GM18951 (cell line): ENCODE measurements at regions of chr6 and their contacts with region 1.

Region 1: DNA sequence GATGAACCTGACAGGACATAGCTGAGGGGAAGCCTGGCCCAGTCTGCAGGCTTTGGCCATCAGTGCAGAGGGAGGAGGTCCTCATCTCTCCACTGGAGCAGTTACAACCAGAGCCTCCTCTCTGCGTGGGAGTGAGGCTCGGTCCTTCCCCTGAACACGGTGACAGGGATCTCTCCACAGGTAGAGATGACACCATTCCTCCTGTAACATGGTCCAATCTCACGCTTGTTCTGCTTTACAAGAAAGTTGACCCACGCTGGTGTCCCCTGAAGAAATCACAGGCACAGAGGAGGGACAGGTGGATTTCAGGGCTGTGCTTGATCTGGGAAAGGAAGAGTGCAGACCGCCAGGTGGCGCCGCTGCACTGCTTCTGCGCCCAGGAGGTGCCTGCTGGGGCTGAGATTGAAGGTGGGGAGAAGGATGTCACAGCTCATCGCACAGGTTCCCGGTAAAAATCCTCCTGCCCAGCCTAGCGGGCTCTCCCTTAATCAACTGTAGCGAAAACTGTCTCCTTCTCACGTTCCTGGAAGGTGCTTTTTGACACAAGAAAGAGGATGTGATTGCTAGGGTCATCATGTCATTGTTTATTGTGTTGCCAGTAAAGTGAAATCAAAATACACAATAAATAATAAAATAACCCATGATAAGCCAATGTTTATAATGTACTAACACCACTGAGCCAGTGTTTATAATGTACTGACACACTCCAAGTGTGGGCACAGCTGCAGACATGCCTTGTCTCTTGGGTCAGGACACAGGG is 20.4 kb downstream of the HLA-G start:
- POLR2A ChIP-seq: no peak

Region 2: DNA sequence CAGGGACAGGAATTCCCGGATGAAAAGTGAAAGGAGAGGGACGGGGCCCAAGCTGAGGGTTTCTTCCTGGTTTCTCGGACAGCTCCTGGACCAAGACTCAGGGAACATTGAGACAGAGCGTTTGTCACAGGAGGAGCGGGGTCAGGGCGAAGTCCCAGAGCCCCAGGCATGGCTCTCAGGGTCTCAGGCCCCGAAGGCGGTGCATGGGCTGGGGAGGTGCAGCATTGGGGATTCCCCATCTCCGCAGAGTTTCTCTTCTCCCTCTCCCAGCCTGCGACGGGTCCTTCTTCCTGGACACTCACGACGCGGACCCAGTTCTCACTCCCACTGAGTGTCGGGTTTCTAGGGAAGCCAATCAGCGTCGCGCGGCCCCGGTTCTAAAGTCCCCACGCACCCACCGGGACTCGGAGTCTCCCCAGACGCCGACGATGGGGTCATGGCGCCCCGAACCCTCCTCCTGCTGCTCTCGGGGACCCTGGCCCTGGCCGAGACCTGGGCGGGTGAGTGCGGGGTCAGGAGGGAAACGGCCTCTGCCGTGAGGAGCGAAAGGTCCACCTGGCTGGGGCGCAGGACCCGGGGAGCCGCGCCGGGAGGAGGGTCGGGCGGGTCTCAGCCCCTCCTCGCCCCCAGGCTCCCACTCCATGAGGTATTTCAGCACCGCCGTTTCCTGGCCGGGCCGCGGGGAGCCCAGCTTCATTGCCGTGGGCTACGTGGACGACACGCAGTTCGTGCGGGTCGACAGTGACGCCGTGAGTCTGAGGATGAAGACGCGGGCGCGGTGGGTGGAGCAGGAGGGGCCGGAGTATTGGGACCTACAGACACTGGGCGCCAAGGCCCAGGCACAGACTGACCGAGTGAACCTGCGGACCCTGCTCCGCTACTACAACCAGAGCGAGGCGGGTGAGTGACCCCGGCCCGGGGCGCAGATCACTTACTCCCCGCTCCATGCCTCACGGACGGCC is 158.4 kb after region 1 on chr6:
- in situ Hi-C with region 1: loop called (anchors 10 kb)
- POLR2A ChIP-seq: no peak

Region 3: DNA sequence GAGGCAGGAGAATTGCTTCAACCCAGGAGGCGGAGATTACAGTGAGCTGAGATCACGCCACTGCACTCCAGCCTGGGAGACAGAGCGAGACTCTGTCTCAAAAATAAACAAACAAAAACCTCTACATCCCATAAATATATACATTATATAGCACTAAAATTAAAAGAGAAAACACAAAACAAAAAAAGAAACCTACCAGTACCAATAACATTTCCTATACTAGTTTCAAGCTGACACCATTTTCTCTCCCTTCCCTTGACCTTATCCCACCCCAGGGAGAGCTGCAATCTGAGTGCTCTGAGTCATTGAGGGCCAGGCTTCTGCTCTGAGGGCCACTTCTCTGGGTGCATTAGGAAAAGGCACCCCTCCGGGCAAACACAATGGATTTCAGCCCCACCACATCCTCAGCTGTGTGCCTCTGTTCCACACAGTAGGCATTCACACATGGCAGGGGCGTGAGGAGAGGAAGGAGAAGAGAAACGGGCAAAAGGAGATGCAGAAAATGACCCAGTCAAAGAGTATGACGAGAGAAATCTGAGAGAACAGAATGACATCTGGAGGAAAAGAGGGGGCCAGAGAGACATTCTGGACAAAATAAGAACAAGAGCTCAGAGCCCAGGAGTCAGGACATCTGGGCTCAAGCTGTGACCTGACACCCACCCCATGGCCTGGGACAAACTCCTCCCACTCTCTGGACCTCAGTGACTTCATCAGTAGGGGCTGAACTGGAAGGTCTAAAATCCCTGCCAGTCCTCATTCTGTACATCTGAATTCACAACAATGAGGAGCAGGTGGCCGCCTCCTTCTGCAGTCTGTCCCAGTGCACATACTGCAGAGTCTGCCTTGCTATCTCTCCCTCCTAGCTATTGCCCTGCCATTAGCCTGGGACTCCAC is 347.0 kb after region 1 on chr6:
- in situ Hi-C with region 1: loop called (anchors 25 kb)
- POLR2A ChIP-seq: no peak